Ascending aorta (tissue), 2 donors: ENCODE measurements at regions of chr10 and their contacts with region 1.

Region 1: DNA sequence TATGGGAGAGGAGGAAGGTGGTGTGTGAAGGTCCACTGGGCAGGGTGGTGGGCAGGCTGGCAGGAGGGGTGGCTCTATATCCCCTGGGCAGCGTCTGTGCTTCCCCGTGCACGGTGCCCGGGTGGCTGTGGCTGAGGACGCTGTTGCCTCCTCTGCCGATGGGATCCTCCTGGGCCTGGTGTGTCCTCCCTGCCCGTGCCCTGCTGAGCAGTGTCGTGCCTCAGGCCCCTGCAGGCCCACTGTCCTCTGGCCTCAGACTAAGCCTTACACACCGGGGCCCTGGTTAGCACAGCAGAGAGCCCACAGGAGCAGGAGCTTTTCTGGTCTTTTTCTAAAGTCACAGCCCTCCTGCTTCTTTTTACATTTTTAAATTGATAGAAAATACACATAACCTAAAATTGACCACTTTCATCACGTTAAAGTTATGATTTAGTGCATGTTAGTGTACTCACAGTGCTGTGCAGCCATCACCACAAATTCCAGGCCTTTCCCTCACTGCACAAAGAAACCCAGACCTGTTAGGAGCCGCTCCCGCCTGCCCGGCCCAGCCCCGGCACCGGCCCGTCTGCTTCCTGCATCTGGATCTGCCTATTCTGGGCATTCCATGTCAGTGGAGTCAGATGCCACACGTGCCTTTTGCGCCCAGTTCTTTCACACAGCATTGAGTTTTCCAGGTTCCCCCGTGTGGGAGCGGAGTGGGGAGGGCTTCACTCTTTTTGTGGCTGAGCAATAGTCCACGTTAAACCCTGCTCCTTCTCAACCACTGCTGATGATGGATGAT is 19.4 kb downstream of the PFKFB3 start:
- DNase-seq: peak in 1 of 2 donors; percentile 90
- H3K4me3 ChIP-seq: peak overlapping the region in 1 of 2 donors; percentile 7
- H3K27ac ChIP-seq: peak overlapping the region; percentile 87 to 93
- H3K4me1 ChIP-seq: peaks cover 10 to 22% of the 10 kb centered on the region in 2 donors
- H3K27me3 ChIP-seq: no peaks in the 10 kb centered on the region
- CTCF ChIP-seq: no peak

Region 2: DNA sequence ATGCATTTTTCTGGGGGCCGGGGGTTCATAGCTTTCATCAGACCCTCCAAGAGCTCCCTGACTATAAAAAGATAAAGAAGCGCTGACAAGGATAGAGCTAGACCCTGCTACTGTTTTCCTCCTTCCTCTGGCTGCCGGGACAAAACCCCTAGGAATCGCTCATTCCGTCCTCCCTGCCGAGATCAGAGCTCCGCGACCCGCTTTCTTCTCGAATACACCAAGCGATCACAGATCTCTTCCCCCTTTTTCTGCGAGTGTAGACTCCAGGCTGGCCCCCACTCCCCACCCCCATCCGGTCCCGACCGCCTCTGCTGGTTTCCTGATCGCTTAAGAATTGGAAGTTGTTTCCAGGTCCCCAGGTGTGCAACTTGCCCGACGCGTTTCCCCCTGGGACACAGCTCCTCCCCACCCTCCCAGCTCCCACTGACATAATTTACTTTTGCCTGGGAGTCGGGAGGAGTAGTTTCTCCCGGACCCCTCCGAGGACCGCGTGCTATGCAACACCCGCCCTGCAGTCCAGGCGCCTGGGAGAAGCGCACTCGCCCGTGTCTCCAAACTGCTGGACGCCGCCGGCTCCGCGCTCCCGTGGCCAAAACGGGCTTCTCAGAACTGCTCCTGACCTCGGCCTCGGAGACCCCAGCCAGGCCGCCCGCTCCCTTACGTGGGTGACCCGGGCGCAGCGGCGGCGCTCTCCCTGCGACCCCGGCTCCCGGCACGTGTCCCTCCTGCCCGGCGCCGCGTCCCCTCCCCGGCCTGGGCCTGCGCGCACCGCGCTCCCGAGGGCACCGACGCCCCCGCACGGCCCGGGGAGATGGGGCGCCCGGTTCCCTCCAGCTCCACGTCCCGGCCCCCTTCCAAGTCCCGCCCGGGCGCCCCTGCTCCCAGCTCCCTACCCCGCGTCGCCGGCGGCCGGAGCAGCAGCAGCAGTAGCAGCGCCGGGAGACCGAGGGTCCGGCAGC is 245.4 kb before region 1 on chr10:
- intact Hi-C with region 1: no loop called
- DNase-seq: peak in 1 of 2 donors; percentile 74
- H3K4me3 ChIP-seq: peak overlapping the region; percentile 94 to 99
- H3K27ac ChIP-seq: peak overlapping the region; percentile 90 to 98
- H3K4me1 ChIP-seq: peaks cover 0 to 14% of the 10 kb centered on the region in 2 donors
- H3K27me3 ChIP-seq: no peaks in the 10 kb centered on the region
- CTCF ChIP-seq: peak in 1 of 3 experiments; percentile 7

Region 3: GRCh38 chr10:6269953-6270867 is 48.0 kb after region 1 on chr10:
- intact Hi-C with region 1: loop called (anchors 5 kb)
- DNase-seq: no peak
- H3K4me3 ChIP-seq: no peak overlapping the region
- H3K27ac ChIP-seq: peak overlapping the region; percentile 95 to 97
- H3K4me1 ChIP-seq: peaks cover 7 to 23% of the 10 kb centered on the region in 2 donors
- H3K27me3 ChIP-seq: no peaks in the 10 kb centered on the region
- CTCF ChIP-seq: no peak

Region 4: DNA sequence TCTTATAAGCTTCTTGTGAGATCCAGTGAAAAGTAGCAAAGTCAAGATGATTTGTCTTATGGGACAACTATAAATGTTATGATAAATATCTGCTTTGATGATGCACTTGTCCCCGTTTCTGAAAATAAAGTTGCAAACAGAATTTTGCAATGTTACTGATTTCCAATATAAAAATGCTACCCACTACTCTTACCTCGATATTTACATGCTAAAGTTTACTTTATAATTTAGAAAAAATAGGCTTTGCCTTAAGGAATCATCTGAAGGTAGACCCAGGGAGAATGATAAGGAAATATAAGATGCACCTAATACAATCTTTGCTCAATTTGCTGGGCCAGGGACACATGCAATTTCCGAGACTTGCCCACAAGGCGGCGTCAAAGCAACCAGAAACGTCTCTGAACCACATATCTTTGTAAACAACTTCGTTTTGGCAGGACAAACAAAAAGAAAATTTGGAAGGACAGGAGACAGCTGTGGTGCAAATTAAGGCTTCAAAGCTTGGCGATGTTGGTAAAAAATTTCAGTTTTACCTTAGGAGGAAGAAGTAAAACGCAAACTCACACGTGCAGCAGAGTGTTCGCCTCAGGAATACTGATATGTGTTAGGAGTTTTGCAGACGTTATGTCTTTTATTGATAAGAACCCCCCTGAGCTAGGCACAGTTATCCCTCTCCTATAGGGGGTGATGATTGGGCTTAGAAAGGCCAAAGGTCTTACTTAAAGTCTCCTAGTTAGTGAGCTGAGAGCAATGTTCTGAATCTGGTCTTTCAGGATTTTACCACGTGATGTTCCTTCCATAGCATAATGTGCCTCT is 223.5 kb after region 1 on chr10:
- intact Hi-C with region 1: no loop called
- DNase-seq: no peak
- H3K4me3 ChIP-seq: no peak overlapping the region
- H3K27ac ChIP-seq: no peak overlapping the region
- H3K4me1 ChIP-seq: no peaks in the 10 kb centered on the region
- H3K27me3 ChIP-seq: no peaks in the 10 kb centered on the region
- CTCF ChIP-seq: peak in 1 of 3 experiments; percentile 21